Right ventricle myocardium inferior (tissue), 1 donor: ENCODE measurements at regions of chr15 and their contacts with region 1.

Region 1: GRCh38 chr15:99169769-99170311 is 65.0 kb downstream of the SYNM start:
- DNase-seq: no peak
- ATAC-seq: peak; percentile 61

Region 2: GRCh38 chr15:99104788-99105513 is 64.9 kb before region 1 on chr15 and contains the start of gene SYNM:
- intact Hi-C with region 1: loop called (anchors 5 kb)
- DNase-seq: peak; percentile 86
- ATAC-seq: peak; percentile 87
- total RNA-seq, gene SYNM: 311 TPM

Region 3: GRCh38 chr15:99123706-99124451 is 46.0 kb before region 1 on chr15:
- intact Hi-C with region 1: loop called (anchors 5 kb)
- DNase-seq: peak; percentile 88
- ATAC-seq: peak; percentile 91

Region 4: GRCh38 chr15:99135194-99135593 is 34.6 kb before region 1 on chr15:
- intact Hi-C with region 1: loop called (anchors 5 kb)
- DNase-seq: no peak
- ATAC-seq: peak; percentile 45

Region 5: GRCh38 chr15:99213187-99213811 is 43.5 kb after region 1 on chr15:
- intact Hi-C with region 1: loop called (anchors 1 kb)
- DNase-seq: peak; percentile 89
- ATAC-seq: peak; percentile 74

Region 6: DNA sequence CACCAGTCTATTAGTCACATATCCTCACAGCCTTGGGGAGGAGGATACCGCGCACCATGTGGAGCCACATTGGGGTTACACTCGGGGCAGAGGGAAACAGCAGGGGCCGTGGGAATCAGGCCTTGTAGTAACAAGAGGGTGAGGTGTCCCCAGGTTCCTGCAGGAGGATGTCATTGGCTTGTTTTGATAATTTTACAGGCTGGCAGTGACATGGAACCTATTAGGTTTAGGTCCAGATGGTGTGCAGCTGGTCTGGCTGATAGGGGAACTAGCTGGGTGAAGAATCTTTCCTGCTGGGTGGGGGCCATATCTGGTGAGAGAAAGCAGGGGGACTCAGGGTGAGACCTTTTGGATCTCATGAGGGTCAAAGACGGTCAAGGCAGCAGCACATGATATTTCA is 386.2 kb after region 1 on chr15:
- intact Hi-C with region 1: no loop called
- DNase-seq: no peak
- ATAC-seq: no peak